Activated T-helper 1 cell treated with anti-CD3 and anti-CD28 coated beads, Interleukin-12 subunit alpha, Interleukin-12 subunit beta, Interleukin-2, Interleukin-4 antibody, amounts not matched to agents 30 ng/mL and 10 ng/mL and 1 ng/mL, durations not matched to agents 14 hours and 24 hours and 36 hours (primary cell): ENCODE measurements at regions of chr6 and their contacts with region 1.

Region 1: GRCh38 chr6:105810105-105810921 is 275.8 kb upstream of the PRDM1 start:
- DNase-seq: peak; percentile 73
- H3K4me3 Mint-ChIP-seq: peak overlapping the region; percentile 58
- H3K27ac Mint-ChIP-seq: peak overlapping the region; percentile 92
- H3K4me1 Mint-ChIP-seq: peaks cover 76% of the 10 kb centered on the region
- H3K27me3 Mint-ChIP-seq: no peaks in the 10 kb centered on the region

Region 2: GRCh38 chr6:105591053-105591452 is 219.3 kb before region 1 on chr6:
- intact Hi-C with region 1: no loop called
- DNase-seq: peak; percentile 27
- H3K4me3 Mint-ChIP-seq: peak overlapping the region; percentile 45
- H3K27ac Mint-ChIP-seq: peak overlapping the region; percentile 57
- H3K4me1 Mint-ChIP-seq: peaks cover 82% of the 10 kb centered on the region
- H3K27me3 Mint-ChIP-seq: no peaks in the 10 kb centered on the region

Region 3: DNA sequence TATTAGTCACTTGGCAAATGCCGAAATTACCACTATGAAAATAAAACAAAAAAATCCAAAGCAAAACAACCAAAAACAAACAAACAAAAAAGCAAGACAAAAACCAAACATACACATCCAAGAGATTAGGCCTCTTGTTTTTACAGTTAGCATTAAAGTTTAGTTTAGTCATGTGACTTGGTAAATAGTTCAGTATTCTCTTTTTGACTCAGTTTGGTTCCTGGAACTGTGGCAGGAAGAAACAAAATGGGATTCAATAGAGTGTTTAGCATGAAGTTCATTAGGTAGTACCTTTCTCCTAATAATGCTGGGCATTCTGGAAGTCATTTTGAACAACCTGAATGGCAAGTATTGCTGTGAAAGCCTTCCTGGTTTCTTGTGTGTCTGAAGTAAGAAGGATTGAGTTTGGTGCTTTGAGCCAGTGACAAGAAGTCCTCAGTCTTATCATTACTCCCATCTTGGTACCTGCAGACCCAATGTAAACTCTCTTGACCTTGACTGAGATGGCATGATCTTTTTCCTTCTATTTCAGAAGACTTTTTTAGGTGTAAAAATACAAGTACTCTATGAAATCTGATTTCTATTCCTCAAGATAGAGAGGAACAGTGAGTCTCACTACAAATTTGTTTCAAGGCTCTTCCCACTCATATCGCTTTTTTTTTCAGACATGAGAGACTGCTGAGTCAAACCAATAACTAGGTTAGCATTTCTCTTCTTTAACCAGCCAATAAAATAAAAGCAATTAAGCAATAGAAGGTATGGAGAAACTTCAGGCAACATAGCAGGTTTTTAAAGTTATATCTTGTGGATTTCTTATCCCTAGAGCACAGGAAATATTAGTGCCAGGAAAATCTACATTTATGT is 183.8 kb before region 1 on chr6:
- intact Hi-C with region 1: loop called (anchors 1 kb)
- DNase-seq: no peak
- H3K4me3 Mint-ChIP-seq: peak overlapping the region; percentile 32
- H3K27ac Mint-ChIP-seq: peak overlapping the region; percentile 89
- H3K4me1 Mint-ChIP-seq: peaks cover 59% of the 10 kb centered on the region
- H3K27me3 Mint-ChIP-seq: peaks cover 3% of the 10 kb centered on the region

Region 4: GRCh38 chr6:105748737-105749161 is 61.6 kb before region 1 on chr6:
- intact Hi-C with region 1: loop called (anchors 1 kb)
- DNase-seq: no peak
- H3K4me3 Mint-ChIP-seq: no peak overlapping the region
- H3K27ac Mint-ChIP-seq: no peak overlapping the region
- H3K4me1 Mint-ChIP-seq: peaks cover 57% of the 10 kb centered on the region
- H3K27me3 Mint-ChIP-seq: no peaks in the 10 kb centered on the region

Region 5: GRCh38 chr6:105793130-105793529 is 17.2 kb before region 1 on chr6:
- intact Hi-C with region 1: loop called (anchors 1 kb)
- DNase-seq: no peak
- H3K4me3 Mint-ChIP-seq: peak overlapping the region; percentile 5
- H3K27ac Mint-ChIP-seq: peak overlapping the region; percentile 66
- H3K4me1 Mint-ChIP-seq: peaks cover 86% of the 10 kb centered on the region
- H3K27me3 Mint-ChIP-seq: no peaks in the 10 kb centered on the region

Region 6: DNA sequence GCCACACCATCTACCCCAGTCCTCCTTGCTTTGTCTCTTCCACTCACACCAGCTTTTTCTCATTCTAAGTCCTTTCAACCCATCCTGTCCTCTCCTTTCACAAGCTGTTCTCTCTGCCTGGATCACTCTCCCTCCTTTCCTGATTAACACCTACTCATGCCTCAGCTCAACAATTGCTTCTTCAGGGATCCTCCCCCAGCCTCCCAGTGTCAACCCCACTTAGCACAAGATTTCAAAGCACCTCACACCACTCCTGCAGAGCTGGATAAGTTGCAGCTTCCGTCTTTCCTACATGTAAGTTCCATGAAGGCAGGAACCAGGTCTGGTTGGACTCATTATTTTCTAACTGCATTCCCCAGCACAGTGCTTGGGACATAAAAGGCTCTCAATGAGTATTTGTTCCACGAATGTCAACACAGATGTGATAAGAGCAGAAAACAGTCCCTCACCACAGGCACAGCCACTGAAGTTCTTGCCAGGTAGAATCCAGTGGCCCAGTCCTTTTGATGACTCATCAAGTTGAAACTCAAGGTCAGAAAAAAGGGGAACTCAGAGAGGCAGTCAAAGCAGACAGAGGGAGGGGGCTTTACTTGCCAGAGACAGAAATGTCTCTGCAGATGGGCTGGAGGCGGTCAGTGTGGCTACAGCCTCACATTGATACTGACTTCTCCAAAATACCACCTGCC is 82.4 kb after region 1 on chr6:
- intact Hi-C with region 1: no loop called
- DNase-seq: no peak
- H3K4me3 Mint-ChIP-seq: peak overlapping the region; percentile 1
- H3K27ac Mint-ChIP-seq: peak overlapping the region; percentile 4
- H3K4me1 Mint-ChIP-seq: peaks cover 39% of the 10 kb centered on the region
- H3K27me3 Mint-ChIP-seq: no peaks in the 10 kb centered on the region

Region 7: DNA sequence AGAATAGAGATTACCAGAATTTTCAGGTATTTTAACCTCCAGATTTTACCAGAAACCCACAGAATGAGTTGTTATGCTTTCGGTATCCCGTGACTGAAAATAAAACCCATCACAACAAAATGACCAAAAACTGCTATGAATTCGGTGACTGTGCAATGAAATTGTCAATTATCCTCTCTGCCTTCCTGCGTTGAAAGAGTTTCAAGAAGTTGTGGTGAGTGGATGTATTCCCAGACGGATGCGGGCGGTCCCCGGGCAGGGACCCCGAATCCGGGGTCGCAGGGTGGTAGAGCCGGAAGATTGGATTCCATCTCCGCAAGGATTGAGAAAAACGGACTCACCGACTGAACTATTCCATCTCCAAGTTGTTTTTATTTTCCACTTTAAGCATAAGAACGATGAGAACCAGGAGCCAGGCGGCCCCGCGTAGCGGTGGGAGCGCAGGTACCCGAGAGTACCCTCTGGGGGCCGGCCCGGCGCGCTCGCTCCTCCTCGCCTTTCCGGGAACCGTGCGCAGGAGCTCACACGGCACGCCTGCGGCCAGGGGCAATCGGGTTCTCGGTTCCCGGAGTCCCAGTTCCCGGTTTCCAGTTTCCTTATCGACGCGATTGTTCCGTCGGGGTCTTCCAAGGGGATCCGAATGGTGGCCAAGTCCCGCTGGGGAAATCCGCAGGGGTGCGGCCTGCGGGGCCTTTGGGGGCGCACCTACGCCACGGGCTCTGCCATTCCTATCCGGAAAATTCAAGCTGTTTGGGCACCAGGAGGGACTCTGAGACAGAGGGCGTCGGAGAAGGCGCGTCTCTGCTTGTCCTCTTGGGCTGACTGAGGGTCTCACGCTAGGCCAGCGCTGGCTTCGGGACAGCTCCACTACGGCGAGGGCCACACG is 170.9 kb after region 1 on chr6:
- intact Hi-C with region 1: loop called (anchors 1 kb)
- DNase-seq: peak; percentile 48
- H3K4me3 Mint-ChIP-seq: peak overlapping the region; percentile 84
- H3K27ac Mint-ChIP-seq: peak overlapping the region; percentile 91
- H3K4me1 Mint-ChIP-seq: peaks cover 79% of the 10 kb centered on the region
- H3K27me3 Mint-ChIP-seq: no peaks in the 10 kb centered on the region